Spleen (tissue), 13 donors: ENCODE measurements at regions of chr19 and their contacts with region 1.

Region 1: GRCh38 chr19:2016041-2016807 is 710 bp upstream of the BTBD2 start:
- DNase-seq: no peak
- H3K4me3 ChIP-seq: peak overlapping the region in 5 of 8 donors; percentile 23 to 83 (median 59)
- H3K27ac ChIP-seq: peak overlapping the region; percentile 27 to 87 (median 74)
- H3K4me1 ChIP-seq: peaks cover 5 to 58% (median 28%) of the 10 kb centered on the region in 6 donors
- H3K27me3 ChIP-seq: no peaks in the 10 kb centered on the region
- CTCF ChIP-seq: no peak
- POLR2A ChIP-seq: no peak

Region 2: DNA sequence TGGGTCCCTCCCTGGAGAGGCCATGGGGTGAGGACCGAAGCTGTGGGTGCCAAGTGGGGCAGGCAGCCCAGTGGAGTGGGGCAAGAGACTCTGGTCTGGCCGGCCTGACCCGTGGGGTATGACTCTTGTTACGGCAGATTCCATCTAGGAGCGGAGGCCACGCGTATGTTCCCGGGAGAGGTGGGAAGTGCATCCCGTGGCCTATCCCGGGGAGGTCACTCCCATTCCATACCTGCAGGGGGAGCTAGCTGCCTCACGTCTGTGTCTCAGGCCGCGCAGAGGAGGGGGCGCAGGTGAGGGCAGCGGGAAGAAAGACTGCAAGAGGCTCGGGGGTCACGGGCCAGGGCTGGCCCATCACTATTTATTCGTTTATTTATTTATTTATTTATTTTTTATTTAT is 70.3 kb before region 1 on chr19:
- intact Hi-C with region 1: loop called (anchors 5 kb)
- DNase-seq: no peak
- H3K4me3 ChIP-seq: no peak overlapping the region
- H3K27ac ChIP-seq: peak overlapping the region in 2 of 8 donors; percentile 39 to 99
- H3K4me1 ChIP-seq: peaks cover 24 to 88% (median 75%) of the 10 kb centered on the region in 6 donors
- H3K27me3 ChIP-seq: no peaks in the 10 kb centered on the region
- CTCF ChIP-seq: peak; percentile 17 to 73 (median 65)
- POLR2A ChIP-seq: no peak

Region 3: DNA sequence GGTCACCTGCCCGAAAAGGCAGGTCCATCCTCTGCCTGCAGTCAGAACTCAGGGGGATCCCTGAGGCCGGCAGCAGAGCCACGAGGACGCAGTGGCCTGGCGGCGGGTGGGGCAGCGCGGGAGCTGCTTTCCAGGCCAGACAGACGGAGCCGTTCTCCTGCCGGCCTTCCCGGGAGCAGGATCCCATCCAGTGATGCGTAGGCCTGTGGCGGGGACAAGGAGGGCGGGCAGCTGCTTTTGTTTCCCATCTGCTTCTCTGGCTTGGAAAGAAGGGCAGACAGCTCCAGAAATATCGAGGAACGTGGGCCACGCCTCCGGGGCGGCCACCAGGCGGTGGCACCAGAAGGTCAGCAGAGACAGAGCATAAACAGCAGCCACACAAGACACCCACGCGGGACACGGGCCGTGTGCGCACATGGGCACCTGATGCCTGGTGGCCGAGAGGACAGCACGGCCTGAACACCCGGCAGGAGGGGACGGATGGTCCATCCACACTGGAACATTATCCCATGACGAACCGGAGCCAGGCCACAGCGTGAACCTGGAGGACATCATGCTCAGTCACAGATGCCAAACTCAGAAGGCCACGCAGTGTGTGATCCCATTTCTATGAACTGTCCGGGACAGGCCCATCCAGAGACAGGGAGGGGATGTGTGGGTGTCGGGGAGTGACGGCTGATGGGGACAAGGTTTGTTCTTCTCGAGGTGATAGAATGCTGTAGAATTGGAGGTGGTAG is 48.7 kb after region 1 on chr19:
- intact Hi-C with region 1: loop called (anchors 5 kb)
- DNase-seq: peak; percentile 72
- H3K4me3 ChIP-seq: no peak overlapping the region
- H3K27ac ChIP-seq: peak overlapping the region in 7 of 8 donors; percentile 39 to 77 (median 67)
- H3K4me1 ChIP-seq: peaks cover 28 to 82% (median 46%) of the 10 kb centered on the region in 6 donors
- H3K27me3 ChIP-seq: no peaks in the 10 kb centered on the region
- CTCF ChIP-seq: no peak
- POLR2A ChIP-seq: no peak